ENCODE measurements at regions of chr2 and their contacts with region 1.

Region 1: DNA sequence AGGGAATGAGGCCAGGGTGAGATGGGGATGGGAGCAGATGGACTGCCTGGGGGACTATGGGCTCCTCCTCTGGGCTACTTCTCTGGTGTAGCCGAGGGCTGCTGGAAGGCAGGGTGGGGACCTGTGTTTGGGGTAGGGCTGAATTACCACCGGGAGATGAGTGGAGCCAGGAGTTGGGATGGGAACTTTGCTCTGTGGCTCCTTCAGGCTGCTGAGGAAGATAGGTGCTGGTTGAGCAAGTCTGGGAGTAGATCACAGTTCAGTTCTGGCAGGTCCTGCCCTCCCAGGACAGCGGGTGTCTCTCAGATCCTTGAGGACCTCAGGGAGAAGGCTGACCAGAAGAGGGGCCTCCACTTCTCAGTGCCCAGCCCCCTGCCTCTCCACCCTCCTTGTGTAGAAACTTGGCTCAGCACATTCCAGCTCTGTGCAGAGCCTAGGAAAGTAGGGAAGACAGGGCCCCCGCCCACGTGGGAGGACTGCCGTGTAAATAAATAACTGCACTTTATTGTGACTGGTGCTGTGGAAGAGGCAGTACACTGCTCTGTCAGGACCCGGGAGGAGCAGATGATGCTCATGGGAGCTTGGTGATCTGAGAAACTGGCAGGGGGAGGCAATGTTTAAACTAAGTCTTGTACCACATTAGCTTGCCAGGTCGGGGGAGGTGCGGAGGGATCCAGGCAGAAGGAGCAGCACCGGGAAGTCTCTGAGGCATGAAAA is 15.3 kb downstream of the TET3 start:
- DNase-seq: no peak

Region 2: DNA sequence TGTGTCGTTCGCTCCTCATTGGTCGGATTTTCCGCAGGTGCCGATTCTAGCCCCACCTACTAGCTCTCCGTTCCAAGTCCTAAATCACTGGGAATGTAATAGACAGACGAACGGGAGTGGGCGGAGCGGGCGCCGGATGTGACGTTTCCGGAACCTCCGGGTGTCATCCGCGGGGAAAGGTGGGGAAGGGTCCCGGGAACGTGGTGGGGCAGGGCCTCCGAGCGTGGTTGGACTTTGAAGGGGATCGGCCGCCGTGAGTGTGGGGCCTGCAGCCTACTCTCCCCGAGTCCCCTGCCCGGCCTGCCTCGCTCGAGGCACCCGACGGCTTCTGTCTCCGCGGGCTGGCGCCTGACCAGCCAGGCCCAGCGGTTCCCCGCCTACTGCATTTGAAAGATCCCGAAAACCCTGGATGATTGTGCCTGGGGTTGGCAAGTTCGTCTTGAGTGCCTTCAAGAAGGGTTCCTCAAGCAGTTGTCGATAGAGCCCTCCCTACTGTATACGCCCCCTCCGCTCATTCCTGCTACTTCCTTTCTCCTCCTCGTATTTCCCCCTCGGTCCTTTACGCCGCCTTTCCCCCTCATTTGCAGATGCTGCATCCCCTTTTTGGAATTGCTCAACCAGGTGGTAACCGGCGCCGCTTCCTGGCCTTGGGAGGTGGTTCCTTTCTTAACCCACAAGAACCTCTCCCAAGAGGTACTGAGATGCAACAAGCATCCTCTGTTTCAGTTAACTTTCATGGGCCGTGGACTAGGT is 171.0 kb before region 1 on chr2 and contains the start of gene STAMBP:
- in situ Hi-C with region 1: loop called (anchors 10 kb)
- DNase-seq: peak; percentile 95

Measured in KBM-7 (cell line).